HepG2 (cell line): ENCODE measurements at regions of chr1 and their contacts with region 1.

Region 1: DNA sequence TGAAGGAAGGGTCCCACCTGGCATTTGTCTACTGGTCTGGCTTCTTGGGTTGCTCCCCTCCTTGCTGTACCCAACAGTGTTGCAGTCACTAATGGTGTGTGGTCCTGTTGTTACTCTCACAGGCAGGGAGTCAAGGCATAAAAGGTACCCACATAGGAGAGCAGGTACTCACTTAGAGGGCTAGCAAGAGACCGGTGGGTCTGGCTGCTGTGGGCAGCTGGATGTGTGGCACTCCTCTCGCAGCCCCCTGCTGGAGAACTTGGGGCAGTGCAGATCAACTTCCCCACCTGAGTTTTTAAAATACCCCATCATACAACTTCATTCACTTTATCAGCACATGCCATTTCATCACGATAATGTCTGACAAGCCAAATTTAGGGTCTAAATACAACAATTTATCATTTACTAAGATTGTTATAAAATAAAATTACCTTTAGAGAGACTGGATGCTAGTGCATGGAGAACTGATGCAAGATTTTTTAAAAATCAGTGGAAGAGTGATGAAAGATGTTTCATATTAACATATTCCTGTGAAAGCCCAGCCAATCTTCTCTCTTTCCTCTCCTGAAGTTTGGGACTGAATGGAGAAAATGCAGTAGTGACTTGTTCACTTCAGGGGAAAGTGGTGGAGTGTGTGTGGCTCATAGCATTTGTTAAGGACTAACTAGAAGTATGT is 42.8 kb downstream of the ACP6 start:
- DNase-seq: peak; percentile 40
- ATAC-seq: peak; percentile 80
- H3K4me3 ChIP-seq: no peak overlapping the region
- H3K27ac ChIP-seq: no peak overlapping the region
- H3K4me1 ChIP-seq: peaks cover 45% of the 10 kb centered on the region
- H3K27me3 ChIP-seq: no peaks in the 10 kb centered on the region; a peak in 1 of 5 replicates
- CTCF ChIP-seq: peak; percentile 80
- EP300 ChIP-seq: no peak
- POLR2A ChIP-seq: no peak
- RAD21 ChIP-seq: peak; percentile 79

Region 2: DNA sequence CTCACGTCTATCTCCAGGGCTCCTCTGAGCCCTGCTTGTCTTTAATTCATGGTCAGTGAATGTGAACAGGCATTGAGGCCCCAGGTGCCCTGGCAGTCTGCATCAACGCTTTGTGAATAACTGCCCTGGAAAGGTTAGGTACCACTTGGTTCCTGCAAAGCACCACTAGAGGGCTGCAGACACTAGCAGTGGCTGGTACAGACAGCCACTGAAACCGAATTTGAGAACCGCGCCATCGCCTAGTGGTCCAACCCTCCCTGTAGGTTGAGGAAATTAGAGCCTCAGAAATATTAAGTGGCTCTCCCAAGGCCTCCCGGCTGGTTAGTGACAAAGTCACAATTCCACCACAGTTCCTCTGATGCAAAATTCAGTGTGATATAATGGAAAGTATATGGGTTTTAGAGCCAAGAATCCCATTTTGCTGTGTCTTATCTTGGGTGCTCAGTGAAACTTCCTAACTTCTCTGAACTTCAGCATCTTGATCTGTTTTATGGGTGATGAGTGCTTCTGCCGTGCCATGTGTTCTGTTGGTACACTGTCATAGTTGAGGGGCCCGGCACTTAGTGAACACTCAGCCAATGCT is 132.5 kb before region 1 on chr1:
- CTCF ChIA-PET with region 1: interaction called, 27 read pairs
- POLR2A ChIA-PET with region 1: no interaction called
- in situ Hi-C with region 1: no loop called
- intact Hi-C with region 1: loop called (anchors 1 kb)
- DNase-seq: peak; percentile 55
- ATAC-seq: peak; percentile 97
- H3K4me3 ChIP-seq: no peak overlapping the region
- H3K27ac ChIP-seq: no peak overlapping the region
- H3K4me1 ChIP-seq: no peaks in the 10 kb centered on the region
- H3K27me3 ChIP-seq: no peaks in the 10 kb centered on the region
- CTCF ChIP-seq: peak; percentile 91
- EP300 ChIP-seq: no peak
- POLR2A ChIP-seq: no peak
- RAD21 ChIP-seq: peak; percentile 77

Region 3: DNA sequence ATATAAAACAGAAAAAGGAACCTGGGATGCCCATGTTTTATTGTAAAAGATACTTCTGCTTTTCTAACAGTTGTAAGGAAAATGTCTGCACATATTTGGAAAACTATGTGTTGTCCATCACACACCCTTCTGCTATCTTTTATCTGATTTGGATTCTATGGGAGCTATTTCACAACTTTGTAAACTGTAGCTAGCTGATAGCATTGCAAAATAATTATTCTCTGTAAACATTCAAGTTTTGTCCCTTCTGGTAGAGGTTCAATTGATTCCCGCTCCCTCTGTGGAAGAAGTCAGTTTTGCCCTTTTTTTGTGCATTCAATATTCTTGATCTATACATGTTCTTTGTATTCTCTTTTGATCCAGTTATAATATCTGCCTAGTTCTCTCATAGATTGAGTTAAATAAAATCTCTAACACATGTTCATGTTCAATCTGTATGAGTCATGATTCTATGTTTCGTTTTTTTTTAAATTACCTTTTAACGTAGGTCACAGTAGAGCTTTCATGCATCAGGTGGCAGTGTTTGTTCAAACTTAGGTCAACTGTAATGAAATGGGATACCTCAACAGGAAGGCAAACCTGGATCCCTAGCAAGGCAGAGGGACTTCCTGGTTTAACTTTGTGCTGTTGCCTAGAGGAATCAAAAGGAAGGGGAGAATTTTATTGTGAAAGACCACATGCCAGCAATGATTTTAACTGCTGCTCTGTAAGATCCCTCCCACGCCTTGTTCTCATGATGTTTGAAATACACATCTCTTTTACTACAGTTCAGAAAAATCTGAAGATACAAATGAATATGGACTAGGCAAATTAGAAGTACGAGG is 112.3 kb before region 1 on chr1:
- CTCF ChIA-PET with region 1: interaction called, 11 read pairs
- POLR2A ChIA-PET with region 1: no interaction called
- in situ Hi-C with region 1: loop called (anchors 5 kb)
- intact Hi-C with region 1: loop called (anchors 1 kb)
- DNase-seq: peak; percentile 87
- ATAC-seq: peak; percentile 98
- H3K4me3 ChIP-seq: no peak overlapping the region
- H3K27ac ChIP-seq: no peak overlapping the region
- H3K4me1 ChIP-seq: peaks cover 16% of the 10 kb centered on the region
- H3K27me3 ChIP-seq: peaks cover 0 to 2% of the 10 kb centered on the region in 2 experiments; a peak in 1 of 5 replicates
- CTCF ChIP-seq: peak; percentile 78
- EP300 ChIP-seq: no peak
- POLR2A ChIP-seq: no peak
- RAD21 ChIP-seq: peak; percentile 58